Esophagus muscularis mucosa (tissue), 4 donors: ENCODE measurements at regions of chr17 and their contacts with region 1.

Region 1: DNA sequence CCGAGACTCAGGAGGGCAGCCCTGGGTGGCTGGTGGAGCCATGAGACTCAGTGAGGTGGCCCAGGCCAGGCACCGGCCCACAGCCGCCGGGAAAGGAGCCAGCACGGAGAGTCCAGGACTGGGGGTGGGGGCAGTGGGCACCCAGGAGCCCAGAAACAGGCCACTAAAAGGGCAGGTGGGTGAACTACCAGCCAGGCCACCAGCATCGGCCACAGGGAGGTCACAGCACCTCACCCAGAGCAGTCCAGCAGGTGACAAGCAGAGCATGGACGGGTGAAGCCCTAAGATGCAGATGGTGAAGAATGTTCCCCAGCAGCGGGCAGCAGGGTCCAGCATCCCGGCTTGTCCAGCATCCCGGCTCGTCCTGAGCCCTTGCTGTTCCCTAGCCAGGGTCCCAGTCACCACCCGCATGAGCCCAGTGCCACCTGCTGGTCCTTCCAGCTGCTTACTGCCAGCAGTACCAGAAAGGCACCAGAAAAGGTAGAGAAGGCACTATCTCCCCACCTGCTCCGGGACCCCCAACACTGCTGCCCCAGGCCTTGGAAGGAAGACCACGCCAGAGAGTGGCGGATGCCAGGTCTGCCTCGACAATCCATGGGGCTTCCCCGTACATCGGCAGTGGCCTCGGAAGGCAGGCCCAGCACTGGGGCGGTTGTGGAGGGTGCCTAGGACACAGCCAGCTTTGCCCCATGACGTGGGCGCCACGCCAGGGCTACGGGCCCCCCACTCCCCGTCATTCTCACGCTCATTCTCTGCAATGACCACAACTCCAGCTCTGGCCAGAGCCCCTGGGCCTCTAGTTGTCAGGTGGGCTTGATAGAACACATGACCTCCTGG is 1.6 kb downstream of the CENPX start:
- DNase-seq: no peak
- H3K4me3 ChIP-seq: peak overlapping the region in 3 of 4 donors; percentile 85 to 96 (median 86)
- H3K27ac ChIP-seq: peak overlapping the region in 1 of 4 donors; percentile 9
- H3K4me1 ChIP-seq: peaks cover 26 to 50% (median 38%) of the 10 kb centered on the region in 4 donors
- H3K27me3 ChIP-seq: no peaks in the 10 kb centered on the region
- CTCF ChIP-seq: peak; percentile 53 to 75 (median 70)
- EP300 ChIP-seq: no peak
- POLR2A ChIP-seq: no peak

Region 2: GRCh38 chr17:81917565-81918332 is 103.4 kb before region 1 on chr17 and contains the start of gene SIRT7:
- intact Hi-C with region 1: no loop called
- DNase-seq: peak; percentile 96
- H3K4me3 ChIP-seq: peak within 1 kb of the TSS; percentile 82 to 100 (median 91)
- H3K27ac ChIP-seq: peak within 1 kb of the TSS; percentile 69 to 87 (median 84)
- H3K4me1 ChIP-seq: peaks cover 19 to 71% (median 56%) of the 10 kb centered on the region in 4 donors
- H3K27me3 ChIP-seq: no peaks in the 10 kb centered on the region
- CTCF ChIP-seq: no peak
- EP300 ChIP-seq: no peak
- POLR2A ChIP-seq: no peak
- total RNA-seq, gene SIRT7: 13.9 to 27.0 (median 19.9) TPM

Region 3: GRCh38 chr17:81959362-81960129 is 61.6 kb before region 1 on chr17:
- intact Hi-C with region 1: loop called (anchors 1 kb)
- DNase-seq: no peak
- H3K4me3 ChIP-seq: peak overlapping the region; percentile 52 to 62 (median 54)
- H3K27ac ChIP-seq: no peak overlapping the region
- H3K4me1 ChIP-seq: peaks cover 16 to 33% (median 27%) of the 10 kb centered on the region in 4 donors
- H3K27me3 ChIP-seq: peaks cover 10 to 100% (median 39%) of the 10 kb centered on the region in 4 donors
- CTCF ChIP-seq: peak; percentile 73 to 97 (median 90)
- EP300 ChIP-seq: no peak
- POLR2A ChIP-seq: no peak